ENCODE measurements at regions of chr9 and their contacts with region 1.

Region 1: GRCh38 chr9:131755541-131756198 is 15.8 kb upstream of the RAPGEF1 start:
- DNase-seq: peak; percentile 79
- H3K4me3 Mint-ChIP-seq: no peak overlapping the region
- H3K27ac Mint-ChIP-seq: no peak overlapping the region
- H3K4me1 Mint-ChIP-seq: no peaks in the 10 kb centered on the region
- H3K27me3 Mint-ChIP-seq: peaks cover 27% of the 10 kb centered on the region
- CTCF ChIP-seq: peak; percentile 87

Region 2: DNA sequence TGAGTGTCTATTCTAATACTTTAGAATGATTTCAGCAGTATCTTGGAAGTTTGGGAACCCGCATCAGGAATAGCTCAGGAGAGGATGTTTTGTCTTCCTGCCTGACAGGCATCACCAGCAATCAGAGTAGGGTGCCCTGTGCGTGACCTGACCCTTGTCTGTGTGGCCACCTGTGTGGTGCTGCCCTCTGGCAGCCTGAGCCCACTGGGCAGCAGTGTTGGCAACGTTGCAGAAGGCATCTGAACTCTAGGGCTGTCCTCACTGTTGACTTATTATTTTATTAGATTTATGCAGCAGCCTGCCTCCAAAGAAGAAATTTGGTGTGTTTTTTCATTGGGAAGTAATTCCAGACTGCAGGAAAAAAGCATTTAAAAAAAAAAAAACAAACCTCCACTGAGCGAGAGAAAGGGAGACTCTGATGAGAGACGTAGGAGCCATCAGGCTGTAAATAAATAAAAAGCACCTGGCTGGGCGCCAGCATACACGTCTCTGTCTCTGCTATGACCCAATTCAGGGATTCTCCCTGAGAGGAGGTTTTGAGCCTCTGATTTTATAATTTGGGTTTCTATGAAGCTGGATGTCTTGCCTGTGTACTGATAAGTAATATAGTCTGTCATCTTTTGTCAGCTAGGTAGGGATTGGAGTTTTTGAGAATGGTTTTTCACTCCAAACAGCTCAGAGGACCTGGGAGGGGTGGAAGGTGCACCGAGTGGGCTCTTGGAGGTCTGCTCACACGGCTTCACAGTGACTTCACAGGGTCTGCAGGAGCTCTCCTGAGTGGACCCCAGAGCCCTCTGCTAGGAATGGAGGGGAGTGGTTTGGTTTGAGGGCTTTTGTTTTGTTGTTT is 528.3 kb before region 1 on chr9:
- CTCF ChIA-PET with region 1: no interaction called
- POLR2A ChIA-PET with region 1: no interaction called
- intact Hi-C with region 1: no loop called
- DNase-seq: no peak
- H3K4me3 Mint-ChIP-seq: no peak overlapping the region
- H3K27ac Mint-ChIP-seq: no peak overlapping the region
- H3K4me1 Mint-ChIP-seq: no peaks in the 10 kb centered on the region
- H3K27me3 Mint-ChIP-seq: no peaks in the 10 kb centered on the region
- CTCF ChIP-seq: no peak

Region 3: GRCh38 chr9:131627648-131628458 is 127.8 kb before region 1 on chr9:
- CTCF ChIA-PET with region 1: no interaction called
- POLR2A ChIA-PET with region 1: no interaction called
- intact Hi-C with region 1: no loop called
- DNase-seq: no peak
- H3K4me3 Mint-ChIP-seq: no peak overlapping the region
- H3K27ac Mint-ChIP-seq: no peak overlapping the region
- H3K4me1 Mint-ChIP-seq: peaks cover 2% of the 10 kb centered on the region
- H3K27me3 Mint-ChIP-seq: no peaks in the 10 kb centered on the region
- CTCF ChIP-seq: no peak

Region 4: GRCh38 chr9:132575005-132575609 is 819.4 kb after region 1 on chr9:
- CTCF ChIA-PET with region 1: interaction called, 3 read pairs
- POLR2A ChIA-PET with region 1: no interaction called
- intact Hi-C with region 1: loop called (anchors 5 kb)
- DNase-seq: peak; percentile 73
- H3K4me3 Mint-ChIP-seq: no peak overlapping the region
- H3K27ac Mint-ChIP-seq: no peak overlapping the region
- H3K4me1 Mint-ChIP-seq: peaks cover 5% of the 10 kb centered on the region
- H3K27me3 Mint-ChIP-seq: peaks cover 78% of the 10 kb centered on the region
- CTCF ChIP-seq: peak; percentile 81